K562 (cell line): ENCODE measurements at regions of chr16 and their contacts with region 1.

Region 1: DNA sequence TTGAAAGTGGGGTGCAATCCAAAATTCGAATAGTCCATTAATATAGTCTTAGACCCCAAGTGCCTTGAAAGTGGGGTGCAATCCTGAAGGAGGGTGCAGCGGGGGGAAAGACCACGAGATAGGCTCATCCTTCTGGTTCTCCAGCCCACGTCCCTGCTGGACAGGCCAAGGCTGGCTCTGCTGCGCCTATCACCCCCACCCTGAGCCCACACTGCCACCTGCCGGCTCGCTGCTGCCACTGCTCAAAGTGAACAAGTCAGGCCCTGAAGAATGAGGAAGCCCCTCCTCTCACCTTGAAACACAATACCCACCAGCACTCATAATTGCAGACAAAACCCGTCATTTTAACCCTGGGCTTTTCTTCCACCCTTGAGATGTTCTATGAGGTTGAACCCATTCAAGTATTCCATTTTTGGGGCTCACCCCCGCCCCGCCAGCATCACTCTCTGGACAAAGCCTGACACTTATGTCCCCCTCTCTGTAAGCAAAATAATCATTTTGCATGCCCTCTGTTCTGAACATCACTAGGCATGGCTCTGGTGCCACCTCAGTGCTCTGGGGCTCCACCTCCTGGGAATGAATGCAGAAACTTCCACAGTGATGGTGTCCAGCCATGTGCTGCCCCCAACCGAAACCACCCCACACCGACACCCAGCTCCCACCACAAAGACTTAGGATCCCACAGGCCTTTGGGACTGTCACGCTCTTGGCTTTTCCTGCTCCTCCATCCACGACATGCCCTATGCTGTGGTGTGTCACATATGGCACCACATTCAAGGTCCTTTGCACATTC is 56.8 kb downstream of the BEAN1 start:
- DNase-seq: peak; percentile 81 to 90 (median 88)
- ATAC-seq: peak; percentile 94
- H3K4me3 ChIP-seq: no peak overlapping the region
- H3K27ac ChIP-seq: no peak overlapping the region
- H3K4me1 ChIP-seq: peaks cover 2 to 5% of the 10 kb centered on the region in 2 experiments; a peak in 3 of 5 replicates
- H3K27me3 ChIP-seq: peaks cover 0 to 11% of the 10 kb centered on the region in 2 experiments; a peak in 2 of 5 replicates
- CTCF ChIP-seq: peak; percentile 96 to 98 (median 96)
- EP300 ChIP-seq: no peak
- POLR2A ChIP-seq: no peak
- RAD21 ChIP-seq: peak; percentile 81 to 91

Region 2: DNA sequence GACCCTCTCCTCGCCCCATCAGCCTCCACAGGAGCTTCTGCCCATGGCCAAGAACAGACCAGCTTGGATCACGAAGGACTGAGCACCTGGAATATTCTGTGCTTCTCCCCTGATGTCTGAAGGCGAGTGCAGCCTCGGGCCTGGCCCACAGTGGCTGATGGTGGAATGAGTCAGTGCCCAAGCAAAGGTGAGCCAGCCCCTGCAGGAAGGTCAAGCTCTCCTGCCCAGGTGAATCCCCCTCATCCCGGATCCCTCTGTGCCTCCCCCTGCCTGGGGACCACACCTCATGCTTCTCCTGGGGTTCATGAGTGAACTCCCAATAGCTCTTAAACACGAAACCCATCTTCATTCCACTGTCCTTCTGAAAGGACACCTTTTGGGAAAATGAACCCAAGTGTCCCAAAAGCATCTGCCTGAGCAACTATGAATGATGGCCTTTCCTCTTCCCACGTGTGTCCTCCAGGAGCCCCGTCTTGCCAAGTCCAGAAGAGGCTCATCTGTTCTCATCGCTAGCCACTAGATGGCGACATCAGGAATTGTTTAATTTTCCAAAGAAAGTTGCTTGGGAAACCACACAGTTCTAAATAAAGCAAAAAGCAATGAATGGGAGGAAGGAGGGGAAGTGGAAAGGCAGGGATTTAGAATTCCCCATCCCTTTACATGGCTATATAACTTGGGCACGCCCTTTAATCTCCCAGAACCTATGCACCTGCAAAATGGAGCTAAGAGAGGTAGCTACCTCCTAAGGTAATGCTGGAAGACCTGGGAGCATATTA is 126.5 kb before region 1 on chr16:
- CTCF ChIA-PET with region 1: interaction called, 4 read pairs
- POLR2A ChIA-PET with region 1: no interaction called
- in situ Hi-C with region 1: no loop called
- intact Hi-C with region 1: loop called (anchors 1 kb)
- DNase-seq: peak; percentile 60 to 76 (median 69)
- ATAC-seq: peak; percentile 81
- H3K4me3 ChIP-seq: no peak overlapping the region
- H3K27ac ChIP-seq: no peak overlapping the region
- H3K4me1 ChIP-seq: peaks cover 0 to 4% of the 10 kb centered on the region in 2 experiments; a peak in 2 of 5 replicates
- H3K27me3 ChIP-seq: peaks cover 7 to 44% of the 10 kb centered on the region in 2 experiments
- CTCF ChIP-seq: peak; percentile 62 to 81 (median 70); a peak in 5 of 6 replicates
- EP300 ChIP-seq: no peak
- POLR2A ChIP-seq: no peak
- RAD21 ChIP-seq: peak; percentile 22 to 48; a peak in 2 of 4 replicates

Region 3: GRCh38 chr16:66588981-66589713 is 105.3 kb after region 1 on chr16:
- CTCF ChIA-PET with region 1: interaction called, 17 read pairs
- POLR2A ChIA-PET with region 1: no interaction called
- in situ Hi-C with region 1: no loop called
- intact Hi-C with region 1: loop called (anchors 1 kb)
- DNase-seq: peak; percentile 72 to 82 (median 80)
- ATAC-seq: peak; percentile 99
- H3K4me3 ChIP-seq: no peak overlapping the region
- H3K27ac ChIP-seq: no peak overlapping the region
- H3K4me1 ChIP-seq: no peaks in the 10 kb centered on the region; a peak in 1 of 5 replicates
- H3K27me3 ChIP-seq: no peaks in the 10 kb centered on the region
- CTCF ChIP-seq: peak; percentile 97 to 99 (median 98)
- EP300 ChIP-seq: no peak
- POLR2A ChIP-seq: no peak
- RAD21 ChIP-seq: peak; percentile 97 to 98